Activated CD4-positive, alpha-beta memory T cell treated with anti-CD3 and anti-CD28 coated beads for 36 hours (primary cell): ENCODE measurements at regions of chr9 and their contacts with region 1.

Region 1: DNA sequence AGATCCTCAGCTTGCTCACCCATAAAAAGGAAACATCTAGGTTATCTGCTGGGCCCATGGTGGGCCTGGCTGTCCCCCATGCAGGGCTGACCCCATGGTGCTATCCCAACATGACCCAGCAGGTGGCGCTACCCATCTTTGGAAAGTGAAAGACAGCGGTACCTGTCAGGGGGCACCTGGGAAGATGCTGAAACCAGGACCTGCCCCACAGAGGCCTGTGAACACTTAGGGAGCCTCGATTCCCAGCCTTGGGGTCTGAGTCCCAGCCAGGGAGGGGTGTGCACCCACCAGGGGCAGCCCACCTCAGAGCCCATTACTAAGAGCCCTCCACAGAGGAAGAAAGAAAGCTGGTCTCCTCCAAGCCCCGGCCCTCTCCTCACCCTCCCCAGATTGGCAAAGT is 46.6 kb upstream of the IPPK start:
- DNase-seq: peak; percentile 85
- H3K4me3 Mint-ChIP-seq: no peak overlapping the region
- H3K27ac Mint-ChIP-seq: no peak overlapping the region
- H3K4me1 Mint-ChIP-seq: peaks cover 15% of the 10 kb centered on the region
- H3K27me3 Mint-ChIP-seq: no peaks in the 10 kb centered on the region

Region 2: GRCh38 chr9:92734931-92735361 is 18.4 kb after region 1 on chr9:
- CTCF ChIA-PET with region 1: interaction called, 17 read pairs
- POLR2A ChIA-PET with region 1: no interaction called
- intact Hi-C with region 1: no loop called
- DNase-seq: no peak
- H3K4me3 Mint-ChIP-seq: no peak overlapping the region
- H3K27ac Mint-ChIP-seq: no peak overlapping the region
- H3K4me1 Mint-ChIP-seq: peaks cover 42% of the 10 kb centered on the region
- H3K27me3 Mint-ChIP-seq: no peaks in the 10 kb centered on the region

Region 3: GRCh38 chr9:92790542-92791527 is 74.3 kb after region 1 on chr9:
- CTCF ChIA-PET with region 1: interaction called, 111 read pairs
- POLR2A ChIA-PET with region 1: no interaction called
- intact Hi-C with region 1: loop called (anchors 1 kb)
- DNase-seq: peak; percentile 78
- H3K4me3 Mint-ChIP-seq: peak overlapping the region; percentile 6
- H3K27ac Mint-ChIP-seq: peak overlapping the region; percentile 39
- H3K4me1 Mint-ChIP-seq: peaks cover 12% of the 10 kb centered on the region
- H3K27me3 Mint-ChIP-seq: no peaks in the 10 kb centered on the region